ENCODE measurements at regions of chr12 and their contacts with region 1.

Region 1: GRCh38 chr12:11959117-11959823 is 111.5 kb upstream of the BCL2L14 start:
- DNase-seq: no peak
- ATAC-seq: no peak
- H3K4me3 ChIP-seq: no peak overlapping the region
- H3K27ac ChIP-seq: 0 out of 2 replicates have a peak overlapping the region, but pooled peaks have one; percentile 5
- H3K4me1 ChIP-seq: peaks cover 12% of the 10 kb centered on the region
- H3K27me3 ChIP-seq: no peaks in the 10 kb centered on the region
- CTCF ChIP-seq: no peak
- EP300 ChIP-seq: no peak
- POLR2A ChIP-seq: no peak
- RAD21 ChIP-seq: no peak

Region 2: DNA sequence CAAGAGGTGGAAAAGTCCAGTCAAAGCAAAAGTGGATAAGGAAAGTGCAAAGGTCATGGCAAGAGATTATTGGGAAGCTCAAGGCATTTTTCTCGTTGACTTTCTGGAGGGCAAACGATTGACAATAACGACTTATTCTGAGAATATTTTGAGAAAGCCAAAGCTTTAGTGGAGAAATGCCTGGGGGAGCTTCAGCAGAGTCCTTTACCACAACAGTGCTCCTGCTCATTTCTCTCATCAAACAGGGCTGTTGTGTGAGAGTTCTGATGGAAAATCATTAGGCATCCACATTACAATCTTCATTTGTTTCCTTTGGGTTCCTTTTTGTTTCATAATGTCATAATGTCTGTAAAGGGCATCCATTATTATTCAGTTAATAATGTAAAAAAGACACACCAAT is 716.6 kb before region 1 on chr12:
- CTCF ChIA-PET with region 1: no interaction called
- POLR2A ChIA-PET with region 1: no interaction called
- RAD21 ChIA-PET with region 1: no interaction called
- SMC1A ChIA-PET with region 1: no interaction called
- in situ Hi-C with region 1: no loop called
- intact Hi-C with region 1: no loop called
- DNase-seq: no peak
- ATAC-seq: no peak
- H3K4me3 ChIP-seq: no peak overlapping the region
- H3K27ac ChIP-seq: no peak overlapping the region
- H3K4me1 ChIP-seq: no peaks in the 10 kb centered on the region
- H3K27me3 ChIP-seq: no peaks in the 10 kb centered on the region; a peak in 1 of 4 replicates
- CTCF ChIP-seq: no peak
- EP300 ChIP-seq: no peak
- POLR2A ChIP-seq: no peak
- RAD21 ChIP-seq: no peak

Region 3: GRCh38 chr12:11822081-11822834 is 137.0 kb before region 1 on chr12:
- CTCF ChIA-PET with region 1: no interaction called
- POLR2A ChIA-PET with region 1: no interaction called
- RAD21 ChIA-PET with region 1: no interaction called
- SMC1A ChIA-PET with region 1: no interaction called
- in situ Hi-C with region 1: no loop called
- intact Hi-C with region 1: no loop called
- DNase-seq: peak; percentile 74
- ATAC-seq: peak; percentile 82
- H3K4me3 ChIP-seq: peak overlapping the region; percentile 55; the same call in 1 of the 2 replicates
- H3K27ac ChIP-seq: peak overlapping the region; percentile 83
- H3K4me1 ChIP-seq: peaks cover 42% of the 10 kb centered on the region
- H3K27me3 ChIP-seq: no peaks in the 10 kb centered on the region
- CTCF ChIP-seq: no peak
- EP300 ChIP-seq: peak; percentile 18 to 38; a peak in 1 of 4 replicates
- POLR2A ChIP-seq: peak; percentile 54; the same call in 1 of the 2 replicates
- RAD21 ChIP-seq: no peak

Region 4: GRCh38 chr12:11969437-11970154 is 10.3 kb after region 1 on chr12:
- CTCF ChIA-PET with region 1: interaction called, 11 read pairs
- POLR2A ChIA-PET with region 1: no interaction called
- RAD21 ChIA-PET with region 1: interaction called, 3 read pairs
- SMC1A ChIA-PET with region 1: interaction called, 4 read pairs
- in situ Hi-C with region 1: no loop called
- intact Hi-C with region 1: no loop called
- DNase-seq: peak; percentile 47
- ATAC-seq: peak; percentile 92
- H3K4me3 ChIP-seq: no peak overlapping the region
- H3K27ac ChIP-seq: peak overlapping the region; percentile 48
- H3K4me1 ChIP-seq: peaks cover 17% of the 10 kb centered on the region
- H3K27me3 ChIP-seq: no peaks in the 10 kb centered on the region
- CTCF ChIP-seq: no peak
- EP300 ChIP-seq: peak; percentile 13 to 27; a peak in 1 of 4 replicates
- POLR2A ChIP-seq: no peak
- RAD21 ChIP-seq: peak; percentile 25; the same call in 1 of the 2 replicates

Region 5: DNA sequence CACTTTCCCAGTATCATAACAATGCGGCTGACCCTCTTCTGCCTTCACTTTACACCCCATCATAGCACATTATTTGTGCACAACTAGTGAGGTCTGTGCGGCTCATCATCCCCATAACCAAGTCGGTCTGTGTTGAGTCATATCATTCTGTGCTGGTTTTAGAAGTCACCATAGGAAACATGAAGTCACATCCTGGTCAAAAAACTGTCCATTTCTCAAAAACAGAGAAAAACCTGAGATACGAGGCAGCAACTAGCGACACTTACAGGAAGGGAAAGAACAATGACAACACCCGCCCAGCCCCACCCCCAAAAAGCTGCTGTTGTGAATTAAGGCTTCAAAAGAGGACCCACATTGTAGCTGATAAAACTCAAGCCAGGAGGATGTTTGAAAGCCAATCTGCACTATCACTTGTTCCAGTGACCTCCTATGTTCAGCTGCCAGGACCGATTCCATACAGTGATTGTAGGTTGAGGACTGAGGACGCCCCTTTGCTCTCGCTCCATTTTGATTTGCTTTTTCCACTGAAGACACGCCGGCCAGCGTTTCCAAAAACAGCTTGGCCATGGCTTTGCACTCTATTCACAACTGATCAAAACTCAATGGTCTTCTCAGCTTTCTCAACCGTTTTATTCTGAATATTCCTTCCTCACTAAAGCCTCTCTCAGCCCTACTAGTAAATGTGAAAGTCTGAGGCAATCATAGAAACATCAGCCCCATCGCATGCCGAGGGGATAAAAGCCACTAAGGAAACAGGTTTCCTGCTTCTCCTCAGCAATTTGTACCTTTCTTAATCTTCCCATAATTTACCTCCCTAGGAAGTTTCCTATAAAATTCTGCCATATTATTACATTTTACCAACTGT is 515.9 kb after region 1 on chr12:
- CTCF ChIA-PET with region 1: no interaction called
- POLR2A ChIA-PET with region 1: no interaction called
- RAD21 ChIA-PET with region 1: no interaction called
- SMC1A ChIA-PET with region 1: no interaction called
- in situ Hi-C with region 1: no loop called
- intact Hi-C with region 1: no loop called
- DNase-seq: peak; percentile 87
- ATAC-seq: peak; percentile 98
- H3K4me3 ChIP-seq: 0 out of 2 replicates have a peak overlapping the region, but pooled peaks have one; percentile 30
- H3K27ac ChIP-seq: peak overlapping the region; percentile 94
- H3K4me1 ChIP-seq: peaks cover 24% of the 10 kb centered on the region
- H3K27me3 ChIP-seq: no peaks in the 10 kb centered on the region
- CTCF ChIP-seq: peak in 1 of 3 experiments; percentile 19; a peak in 1 of 6 replicates
- EP300 ChIP-seq: peak; percentile 82 to 88; a peak in 3 of 4 replicates
- POLR2A ChIP-seq: no peak
- RAD21 ChIP-seq: peak; percentile 61

Region 6: GRCh38 chr12:12564911-12565310 is 605.6 kb after region 1 on chr12:
- CTCF ChIA-PET with region 1: no interaction called
- POLR2A ChIA-PET with region 1: no interaction called
- RAD21 ChIA-PET with region 1: no interaction called
- SMC1A ChIA-PET with region 1: no interaction called
- in situ Hi-C with region 1: no loop called
- intact Hi-C with region 1: no loop called
- DNase-seq: no peak
- ATAC-seq: no peak
- H3K4me3 ChIP-seq: no peak overlapping the region
- H3K27ac ChIP-seq: no peak overlapping the region
- H3K4me1 ChIP-seq: peaks cover 13% of the 10 kb centered on the region
- H3K27me3 ChIP-seq: no peaks in the 10 kb centered on the region
- CTCF ChIP-seq: no peak
- EP300 ChIP-seq: no peak
- POLR2A ChIP-seq: no peak
- RAD21 ChIP-seq: no peak